ENCODE measurements at regions of chr17 and their contacts with region 1.

Region 1: DNA sequence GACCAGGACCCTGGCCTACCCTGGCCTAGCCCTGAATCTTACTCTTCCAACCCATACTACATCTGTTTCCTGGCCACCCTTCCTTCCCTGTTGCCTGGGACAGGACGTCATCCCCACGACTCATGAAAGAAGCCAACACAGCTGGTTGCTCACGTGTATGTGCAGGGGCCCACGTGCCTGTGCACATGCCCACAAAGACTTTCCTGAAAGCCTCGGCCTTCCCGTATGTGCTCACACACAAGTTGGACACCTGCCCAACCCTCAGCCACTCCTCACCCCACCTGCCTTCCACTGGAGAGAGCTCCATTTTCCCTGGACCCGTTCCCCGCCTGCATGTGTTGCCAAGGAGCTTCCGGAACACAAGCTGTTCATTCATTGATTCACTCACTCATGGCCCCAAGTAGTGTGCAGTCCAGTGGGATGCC is 7.0 kb downstream of the PLXDC1 start:
- DNase-seq: peak; percentile 88 to 94 (median 91)
- ATAC-seq: peak; percentile 82 to 92 (median 90)
- H3K4me3 ChIP-seq: no peak overlapping the region
- H3K27ac ChIP-seq: peak overlapping the region; percentile 22 to 89 (median 79)
- H3K4me1 ChIP-seq: peaks cover 0 to 41% (median 17%) of the 10 kb centered on the region in 12 donors
- H3K27me3 ChIP-seq: peaks cover 0 to 3% (median 0%) of the 10 kb centered on the region in 9 donors
- CTCF ChIP-seq: no peak
- POLR2A ChIP-seq: no peak

Region 2: DNA sequence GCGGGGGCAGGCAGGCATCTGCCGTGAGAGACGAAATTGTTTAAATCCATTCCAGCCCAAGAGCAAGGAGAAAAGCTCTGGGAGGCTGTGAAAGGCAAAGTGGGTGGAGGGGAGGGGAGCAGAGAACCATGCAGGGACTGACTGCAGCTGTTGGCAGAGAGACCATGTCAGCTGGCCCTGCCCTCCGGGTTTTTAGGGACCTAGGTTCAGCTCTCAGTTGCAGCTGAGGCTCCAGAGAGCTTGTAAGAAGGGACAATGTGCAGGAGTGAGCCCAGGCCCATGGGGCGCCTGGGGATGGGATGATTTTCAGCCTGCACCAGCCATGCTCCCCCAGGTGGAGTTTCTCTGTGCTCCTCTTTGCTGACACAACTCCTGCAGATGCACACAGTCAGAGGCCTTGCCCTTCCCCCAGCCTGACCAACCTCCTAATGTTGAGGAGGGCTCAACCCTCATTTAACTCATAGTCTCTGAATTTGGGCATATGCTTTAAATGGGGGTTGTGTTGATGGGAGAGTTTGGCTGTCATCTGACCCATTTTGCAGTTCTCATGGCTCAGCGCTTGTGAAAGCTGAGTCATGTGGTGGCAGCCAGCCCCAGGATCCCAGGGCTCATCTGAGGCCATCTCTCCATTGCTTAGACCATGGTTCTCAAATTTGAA is 63.9 kb before region 1 on chr17:
- intact Hi-C with region 1: loop called in 3 of 10 experiments (anchors 2 to 5 kb)
- DNase-seq: peak in 2 of 5 donors; percentile 44 to 71
- ATAC-seq: peak in 3 of 4 donors; percentile 34 to 69 (median 52)
- H3K4me3 ChIP-seq: no peak overlapping the region
- H3K27ac ChIP-seq: peak overlapping the region in 8 of 12 donors; percentile 25 to 89 (median 47)
- H3K4me1 ChIP-seq: peaks cover 0 to 48% (median 29%) of the 10 kb centered on the region in 12 donors
- H3K27me3 ChIP-seq: no peaks in the 10 kb centered on the region
- CTCF ChIP-seq: no peak
- POLR2A ChIP-seq: no peak

Region 3: GRCh38 chr17:39099663-39100286 is 44.7 kb before region 1 on chr17:
- intact Hi-C with region 1: loop called in 3 of 10 experiments (anchors 5 to 10 kb)
- DNase-seq: peak in 4 of 5 donors; percentile 75 to 88 (median 86)
- ATAC-seq: peak in 3 of 4 donors; percentile 54 to 64 (median 63)
- H3K4me3 ChIP-seq: peak overlapping the region in 1 of 12 donors; percentile 14
- H3K27ac ChIP-seq: peak overlapping the region in 11 of 12 donors; percentile 15 to 87 (median 69)
- H3K4me1 ChIP-seq: peaks cover 0 to 60% (median 41%) of the 10 kb centered on the region in 12 donors
- H3K27me3 ChIP-seq: no peaks in the 10 kb centered on the region
- CTCF ChIP-seq: no peak
- POLR2A ChIP-seq: no peak

Region 4: DNA sequence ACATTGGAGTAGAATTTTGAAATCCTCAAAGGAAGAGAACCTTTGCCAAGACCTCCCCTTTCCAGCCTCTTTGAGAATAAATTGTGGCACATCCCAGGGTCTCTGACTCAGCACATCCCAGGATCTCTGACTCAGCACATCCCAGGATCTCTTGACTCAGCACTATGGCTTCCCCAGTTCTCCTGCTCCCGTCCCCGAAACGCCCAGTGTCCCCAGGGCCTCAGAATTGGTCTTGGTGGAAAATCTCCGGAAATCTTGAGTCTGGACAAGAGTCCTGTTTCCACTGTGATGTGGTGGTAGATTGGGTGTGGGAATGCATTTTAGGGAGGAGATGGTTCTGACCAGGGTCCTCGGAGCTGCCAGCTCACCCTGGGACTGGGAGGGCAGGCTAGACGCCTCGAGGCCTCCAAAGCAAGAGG is 12.2 kb before region 1 on chr17:
- intact Hi-C with region 1: no loop called
- DNase-seq: peak in 3 of 5 donors; percentile 40 to 62 (median 49)
- ATAC-seq: peak; percentile 27 to 85 (median 66)
- H3K4me3 ChIP-seq: no peak overlapping the region
- H3K27ac ChIP-seq: peak overlapping the region in 6 of 12 donors; percentile 14 to 54 (median 28)
- H3K4me1 ChIP-seq: peaks cover 0 to 24% (median 2%) of the 10 kb centered on the region in 12 donors
- H3K27me3 ChIP-seq: no peaks in the 10 kb centered on the region
- CTCF ChIP-seq: no peak
- POLR2A ChIP-seq: no peak

Measured in heart left ventricle (tissue), 16 donors.